Activated T-helper 2 cell treated with anti-CD3 and anti-CD28 coated beads, Interferon-gamma antibody, Interleukin-2, Interleukin-4, amounts not matched to agents 10 μg/mL and 5 μg/mL and 100 μg/mL, durations not matched to agents 14 hours and 24 hours and 36 hours (primary cell): ENCODE measurements at regions of chr6 and their contacts with region 1.

Region 1: GRCh38 chr6:53651764-53652401 is 13.7 kb downstream of the KLHL31 start:
- DNase-seq: peak; percentile 70
- H3K4me3 Mint-ChIP-seq: peak overlapping the region; percentile 86
- H3K27ac Mint-ChIP-seq: peak overlapping the region; percentile 86
- H3K4me1 Mint-ChIP-seq: peaks cover 30% of the 10 kb centered on the region
- H3K27me3 Mint-ChIP-seq: peaks cover 27% of the 10 kb centered on the region

Region 2: DNA sequence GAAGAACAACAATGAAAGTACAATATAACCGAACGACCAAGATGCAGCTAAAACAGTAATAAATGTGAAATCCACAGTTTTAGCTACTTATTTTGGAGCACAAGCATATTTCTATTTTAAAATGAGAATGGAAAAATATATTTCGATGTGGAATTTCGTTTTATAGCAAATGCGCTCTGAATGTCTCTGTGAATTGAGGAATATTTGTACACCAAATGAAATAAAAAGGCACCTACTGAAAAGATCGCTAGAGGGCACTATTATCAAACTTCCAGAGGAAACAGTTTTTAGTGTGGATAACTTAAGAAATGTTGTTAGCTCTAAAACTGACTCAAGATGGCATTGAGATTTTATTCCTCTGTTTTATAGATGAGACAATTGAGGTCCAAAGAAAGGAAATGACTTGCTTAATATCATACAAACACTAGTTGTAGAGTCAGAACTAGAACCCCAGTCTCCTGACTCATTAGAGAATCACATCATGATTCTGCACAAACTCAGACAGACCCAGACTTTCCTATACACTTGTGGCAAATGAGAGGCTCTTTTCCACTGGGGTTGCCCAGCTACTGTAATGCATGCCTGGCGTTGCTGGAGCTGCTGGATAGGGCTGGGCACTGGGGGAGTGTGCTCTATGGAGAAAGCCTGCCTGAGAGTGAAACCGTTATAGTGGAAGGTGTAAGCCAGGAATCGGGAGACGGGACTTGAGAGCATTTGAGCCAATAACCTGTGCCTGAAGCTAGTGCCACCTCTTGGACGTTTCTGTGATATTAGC is 158.8 kb before region 1 on chr6:
- intact Hi-C with region 1: loop called (anchors 1 kb)
- DNase-seq: no peak
- H3K4me3 Mint-ChIP-seq: no peak overlapping the region
- H3K27ac Mint-ChIP-seq: peak overlapping the region; percentile 65
- H3K4me1 Mint-ChIP-seq: peaks cover 21% of the 10 kb centered on the region
- H3K27me3 Mint-ChIP-seq: peaks cover 5% of the 10 kb centered on the region

Region 3: GRCh38 chr6:53725791-53726431 is 74.0 kb after region 1 on chr6:
- intact Hi-C with region 1: loop called (anchors 5 kb)
- DNase-seq: peak; percentile 56
- H3K4me3 Mint-ChIP-seq: no peak overlapping the region
- H3K27ac Mint-ChIP-seq: no peak overlapping the region
- H3K4me1 Mint-ChIP-seq: peaks cover 6% of the 10 kb centered on the region
- H3K27me3 Mint-ChIP-seq: peaks cover 24% of the 10 kb centered on the region